HepG2 (cell line): ENCODE measurements at regions of chr18 and their contacts with region 1.

Region 1: DNA sequence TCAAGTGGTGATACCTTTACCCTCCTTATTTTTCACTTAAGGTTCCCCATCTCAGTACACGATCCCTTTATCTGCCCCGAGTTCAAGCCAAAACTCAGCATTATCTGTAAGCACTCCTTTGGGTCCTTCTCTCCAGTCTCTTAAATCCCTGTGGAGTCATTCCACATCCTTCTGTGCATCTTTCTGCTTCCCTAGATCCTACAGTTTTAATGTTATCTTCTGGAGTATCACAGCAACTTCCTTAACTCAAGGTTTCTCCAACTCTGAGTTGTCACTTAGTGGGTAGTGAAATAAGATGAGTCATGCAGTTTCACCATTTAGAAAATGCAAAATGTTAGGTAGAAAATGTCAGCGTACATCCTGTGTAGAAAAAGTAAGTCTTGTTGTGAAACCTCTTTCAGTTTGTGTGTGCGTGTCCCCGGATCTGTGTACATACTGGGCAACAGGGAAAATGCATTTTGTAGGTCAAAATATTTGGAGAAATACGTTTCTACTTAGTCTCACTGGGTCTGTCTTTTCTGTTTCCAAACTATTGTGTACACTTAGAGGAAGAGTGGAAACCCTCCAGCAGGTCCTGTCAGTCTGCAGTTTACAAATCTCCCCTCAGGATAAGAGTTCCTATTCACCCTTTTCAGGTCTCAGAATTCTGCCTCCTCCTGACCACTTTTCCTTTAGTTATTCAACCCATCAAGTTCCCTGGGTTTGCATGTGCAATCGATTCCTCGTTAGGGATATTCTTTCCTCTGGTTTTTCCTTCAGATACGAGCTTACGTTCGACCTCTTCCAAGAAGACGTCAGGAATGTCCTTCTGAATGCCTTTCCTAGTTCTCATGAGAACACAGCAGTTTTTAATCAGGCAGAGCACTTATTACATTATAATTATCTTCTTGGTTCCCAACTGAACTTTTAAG is 154.8 kb downstream of the TGIF1 start:
- DNase-seq: peak; percentile 93
- ATAC-seq: peak; percentile 78
- H3K4me3 ChIP-seq: peak overlapping the region; percentile 42 to 45 (median 45); a peak in 5 of 6 replicates
- H3K27ac ChIP-seq: peak overlapping the region; percentile 93
- H3K4me1 ChIP-seq: peaks cover 75% of the 10 kb centered on the region
- H3K27me3 ChIP-seq: no peaks in the 10 kb centered on the region
- CTCF ChIP-seq: no peak
- EP300 ChIP-seq: peak in 1 of 2 experiments; percentile 77; a peak in 1 of 4 replicates
- POLR2A ChIP-seq: peak in 1 of 2 experiments; percentile 35; a peak in 1 of 4 replicates
- RAD21 ChIP-seq: no peak

Region 2: GRCh38 chr18:3037423-3037915 is 567.3 kb before region 1 on chr18:
- CTCF ChIA-PET with region 1: no interaction called
- POLR2A ChIA-PET with region 1: no interaction called
- in situ Hi-C with region 1: loop called (anchors 25 kb)
- intact Hi-C with region 1: no loop called
- DNase-seq: peak; percentile 98
- ATAC-seq: peak; percentile 100
- H3K4me3 ChIP-seq: no peak overlapping the region; a peak in 1 of 6 replicates
- H3K27ac ChIP-seq: peak overlapping the region; percentile 73
- H3K4me1 ChIP-seq: peaks cover 57% of the 10 kb centered on the region
- H3K27me3 ChIP-seq: no peaks in the 10 kb centered on the region; a peak in 1 of 5 replicates
- CTCF ChIP-seq: no peak
- EP300 ChIP-seq: peak; percentile 66 to 96; a peak in 3 of 4 replicates
- POLR2A ChIP-seq: peak in 1 of 2 experiments; percentile 44; a peak in 1 of 4 replicates
- RAD21 ChIP-seq: no peak

Region 3: GRCh38 chr18:3447895-3448837 is 156.6 kb before region 1 on chr18:
- CTCF ChIA-PET with region 1: no interaction called
- POLR2A ChIA-PET with region 1: interaction called, 17 read pairs
- in situ Hi-C with region 1: no loop called
- intact Hi-C with region 1: no loop called
- DNase-seq: peak; percentile 93
- ATAC-seq: peak; percentile 85
- H3K4me3 ChIP-seq: peak overlapping the region; percentile 68 to 93 (median 93)
- H3K27ac ChIP-seq: peak overlapping the region; percentile 88
- H3K4me1 ChIP-seq: peaks cover 19% of the 10 kb centered on the region
- H3K27me3 ChIP-seq: no peaks in the 10 kb centered on the region; a peak in 1 of 5 replicates
- CTCF ChIP-seq: peak; percentile 36
- EP300 ChIP-seq: peak in 1 of 2 experiments; percentile 44; a peak in 2 of 4 replicates
- POLR2A ChIP-seq: peak; percentile 84 to 90
- RAD21 ChIP-seq: peak; percentile 14; the same call in 1 of the 2 replicates

Region 4: GRCh38 chr18:3615374-3615985 is 10.7 kb after region 1 on chr18:
- CTCF ChIA-PET with region 1: no interaction called
- POLR2A ChIA-PET with region 1: interaction called, 56 read pairs
- in situ Hi-C with region 1: no loop called
- intact Hi-C with region 1: loop called (anchors 1 kb)
- DNase-seq: no peak
- ATAC-seq: no peak
- H3K4me3 ChIP-seq: no peak overlapping the region
- H3K27ac ChIP-seq: peak overlapping the region; percentile 39
- H3K4me1 ChIP-seq: peaks cover 79% of the 10 kb centered on the region
- H3K27me3 ChIP-seq: no peaks in the 10 kb centered on the region
- CTCF ChIP-seq: no peak
- EP300 ChIP-seq: no peak
- POLR2A ChIP-seq: no peak
- RAD21 ChIP-seq: no peak

Region 5: DNA sequence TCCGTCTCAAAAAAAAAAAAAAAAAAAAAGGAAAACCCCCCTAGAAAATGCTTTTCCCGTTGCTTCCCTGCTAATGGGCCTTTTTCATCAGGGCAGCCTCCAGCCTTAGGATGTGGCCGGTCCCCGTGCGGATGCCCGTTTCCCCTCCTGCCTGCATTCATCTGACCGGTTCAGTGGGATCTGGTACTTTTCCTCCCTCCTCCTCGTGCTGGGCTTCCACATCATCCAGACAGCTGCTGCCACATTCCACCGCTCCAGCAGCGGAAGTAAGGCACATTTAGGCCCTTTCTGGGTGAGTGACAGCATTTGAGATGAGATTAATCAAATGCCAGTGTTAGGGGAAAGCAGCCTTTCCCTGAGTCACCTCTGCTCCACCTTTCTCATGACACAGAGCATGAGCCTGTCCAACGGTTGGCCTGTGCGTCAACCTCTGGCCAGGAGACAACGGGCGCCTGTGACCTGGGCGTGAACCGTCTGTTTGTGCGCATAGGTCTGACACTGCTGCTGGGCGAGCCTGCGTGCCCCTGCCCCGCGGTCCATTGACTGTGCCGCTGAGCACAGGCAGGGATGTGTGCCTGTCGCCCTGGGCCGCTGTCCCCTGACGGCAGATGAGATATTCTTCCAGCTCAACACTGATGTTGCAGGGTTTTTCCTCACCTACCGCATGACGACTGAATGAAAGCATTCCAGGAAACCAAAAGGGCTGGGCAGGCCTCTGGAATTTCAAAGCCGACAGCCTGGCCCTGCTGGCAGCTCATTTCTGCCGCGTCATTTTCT is 19.2 kb after region 1 on chr18:
- CTCF ChIA-PET with region 1: no interaction called
- POLR2A ChIA-PET with region 1: interaction called, 56 read pairs
- in situ Hi-C with region 1: no loop called
- intact Hi-C with region 1: no loop called
- DNase-seq: peak; percentile 98
- ATAC-seq: peak; percentile 96
- H3K4me3 ChIP-seq: peak overlapping the region; percentile 37 to 64 (median 52)
- H3K27ac ChIP-seq: peak overlapping the region; percentile 94
- H3K4me1 ChIP-seq: peaks cover 81% of the 10 kb centered on the region
- H3K27me3 ChIP-seq: peaks cover 0 to 1% of the 10 kb centered on the region in 2 experiments; a peak in 1 of 5 replicates
- CTCF ChIP-seq: peak; percentile 19; the same call in 1 of the 2 replicates
- EP300 ChIP-seq: peak; percentile 23 to 72
- POLR2A ChIP-seq: peak; percentile 93 to 94
- RAD21 ChIP-seq: peak; percentile 61

Region 6: GRCh38 chr18:3652380-3653262 is 47.9 kb after region 1 on chr18:
- CTCF ChIA-PET with region 1: no interaction called
- POLR2A ChIA-PET with region 1: interaction called, 11 read pairs
- in situ Hi-C with region 1: no loop called
- intact Hi-C with region 1: no loop called
- DNase-seq: peak; percentile 96
- ATAC-seq: peak; percentile 83
- H3K4me3 ChIP-seq: 0 out of 6 replicates have a peak overlapping the region, but pooled peaks of 1 of the 3 experiments have one; percentile 7
- H3K27ac ChIP-seq: peak overlapping the region; percentile 67
- H3K4me1 ChIP-seq: peaks cover 88% of the 10 kb centered on the region
- H3K27me3 ChIP-seq: no peaks in the 10 kb centered on the region
- CTCF ChIP-seq: no peak
- EP300 ChIP-seq: peak in 1 of 2 experiments; percentile 86; a peak in 2 of 4 replicates
- POLR2A ChIP-seq: peak; percentile 49 to 78; a peak in 3 of 4 replicates
- RAD21 ChIP-seq: peak; percentile 19; the same call in 1 of the 2 replicates

Region 7: GRCh38 chr18:4017480-4017879 is 412.7 kb after region 1 on chr18:
- CTCF ChIA-PET with region 1: no interaction called
- POLR2A ChIA-PET with region 1: no interaction called
- in situ Hi-C with region 1: no loop called
- intact Hi-C with region 1: no loop called
- DNase-seq: no peak
- ATAC-seq: peak; percentile 49; the same call in 2 of the 3 replicates
- H3K4me3 ChIP-seq: no peak overlapping the region
- H3K27ac ChIP-seq: no peak overlapping the region
- H3K4me1 ChIP-seq: no peaks in the 10 kb centered on the region
- H3K27me3 ChIP-seq: peaks cover 0 to 8% of the 10 kb centered on the region in 2 experiments; a peak in 1 of 5 replicates
- CTCF ChIP-seq: no peak
- EP300 ChIP-seq: no peak
- POLR2A ChIP-seq: no peak
- RAD21 ChIP-seq: no peak